T-cell (primary cell): ENCODE measurements at regions of chr5 and their contacts with region 1.

Region 1: GRCh38 chr5:110031402-110032140 is 341.8 kb downstream of the MAN2A1 start:
- DNase-seq: peak in 29 of 35 experiments; percentile 5 to 50 (median 16)
- ATAC-seq: peak in 3 of 4 experiments; percentile 53 to 64 (median 55)
- H3K4me3 ChIP-seq: no peak overlapping the region
- H3K4me3 Mint-ChIP-seq: no peak overlapping the region
- H3K27ac ChIP-seq: no peak overlapping the region
- H3K27ac Mint-ChIP-seq: peak overlapping the region in 1 of 2 donors; percentile 37
- H3K4me1 ChIP-seq: peaks cover 2 to 5% of the 10 kb centered on the region in 2 experiments
- H3K4me1 Mint-ChIP-seq: peaks cover 22 to 49% (median 32%) of the 10 kb centered on the region in 3 donors
- H3K27me3 ChIP-seq: no peaks in the 10 kb centered on the region
- H3K27me3 Mint-ChIP-seq: no peaks in the 10 kb centered on the region

Region 2: DNA sequence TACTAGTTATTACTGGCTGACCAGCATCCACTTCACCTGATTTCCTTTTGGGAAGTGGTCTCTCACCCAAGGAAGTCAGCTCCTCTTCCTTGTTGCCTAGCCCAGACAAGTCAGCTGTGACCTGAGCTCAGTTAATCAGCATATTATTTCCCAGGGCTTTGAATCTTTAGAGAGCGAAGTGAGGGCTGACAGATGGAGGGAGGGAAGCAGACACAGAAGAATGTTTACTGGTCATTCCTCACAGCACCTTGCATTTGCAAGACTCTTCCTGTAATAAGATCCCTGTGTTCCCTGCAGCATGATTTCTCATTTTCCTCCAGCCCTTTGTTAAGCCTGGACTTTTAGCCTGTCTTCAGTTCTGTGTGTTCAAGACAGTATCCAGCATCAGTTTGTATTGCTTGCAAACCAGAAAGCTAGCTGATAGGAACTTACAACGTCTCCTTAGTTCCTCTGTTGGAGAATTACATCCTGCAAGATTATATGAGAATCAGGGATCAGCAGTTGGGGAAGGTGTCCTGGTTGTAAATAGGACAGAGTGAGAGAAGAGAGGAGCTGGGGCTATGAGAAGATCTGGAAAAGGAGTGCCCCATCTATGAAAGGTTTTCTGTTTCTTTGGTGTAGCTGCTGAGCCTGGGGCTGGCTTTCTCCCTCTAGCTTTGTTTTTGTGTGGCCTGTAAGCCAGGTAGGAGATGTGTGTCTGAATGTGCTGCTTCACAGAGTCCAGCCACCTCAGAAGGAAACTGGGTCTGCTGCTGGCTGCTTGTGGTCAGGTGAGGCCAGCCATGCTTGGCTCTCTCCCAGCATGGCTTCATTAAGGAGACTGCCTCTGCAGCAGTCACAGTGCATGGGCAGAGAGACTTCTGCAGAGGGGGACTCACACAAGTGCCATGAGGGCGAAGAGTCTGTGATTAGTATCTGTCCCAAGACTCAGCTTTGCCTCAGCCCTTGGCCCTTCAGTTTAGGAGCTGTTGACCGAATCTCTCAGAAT is 291.5 kb before region 1 on chr5:
- CTCF ChIA-PET with region 1: no interaction called
- POLR2A ChIA-PET with region 1: no interaction called
- DNase-seq: no peak
- ATAC-seq: peak in 2 of 4 experiments; percentile 15 to 45
- H3K4me3 ChIP-seq: no peak overlapping the region
- H3K4me3 Mint-ChIP-seq: peak overlapping the region in 1 of 3 donors; percentile 4
- H3K27ac ChIP-seq: no peak overlapping the region
- H3K27ac Mint-ChIP-seq: peak overlapping the region in 1 of 2 donors; percentile 56
- H3K4me1 ChIP-seq: peaks cover 0 to 8% of the 10 kb centered on the region in 2 experiments
- H3K4me1 Mint-ChIP-seq: peaks cover 66 to 75% (median 66%) of the 10 kb centered on the region in 3 donors
- H3K27me3 ChIP-seq: no peaks in the 10 kb centered on the region
- H3K27me3 Mint-ChIP-seq: no peaks in the 10 kb centered on the region

Region 3: DNA sequence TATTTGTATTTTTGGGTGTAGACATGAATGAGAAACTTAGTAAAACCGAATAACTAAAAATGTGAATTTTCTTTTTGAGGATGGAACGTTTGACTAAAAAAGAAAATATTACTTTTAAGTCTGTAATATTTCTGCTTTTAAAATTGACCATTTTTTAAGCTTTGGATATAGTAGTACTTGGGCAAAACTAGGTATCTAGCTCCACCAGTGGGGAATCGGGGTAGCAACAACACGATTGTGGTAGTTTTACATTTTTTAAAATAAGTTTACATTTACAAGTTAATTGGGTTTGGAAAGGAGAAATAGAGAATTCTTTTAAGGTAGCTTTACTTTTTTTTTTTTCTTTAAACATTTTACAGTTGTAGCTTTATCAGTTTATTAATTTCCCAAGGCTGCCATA is 187.4 kb before region 1 on chr5:
- CTCF ChIA-PET with region 1: no interaction called
- POLR2A ChIA-PET with region 1: interaction called in 1 of 2 experiments, 12 read pairs
- DNase-seq: no peak
- ATAC-seq: no peak
- H3K4me3 ChIP-seq: no peak overlapping the region
- H3K4me3 Mint-ChIP-seq: no peak overlapping the region
- H3K27ac ChIP-seq: no peak overlapping the region
- H3K27ac Mint-ChIP-seq: no peak overlapping the region
- H3K4me1 ChIP-seq: peaks cover 16 to 19% of the 10 kb centered on the region in 2 experiments
- H3K4me1 Mint-ChIP-seq: peaks cover 31 to 47% (median 40%) of the 10 kb centered on the region in 3 donors
- H3K27me3 ChIP-seq: no peaks in the 10 kb centered on the region
- H3K27me3 Mint-ChIP-seq: no peaks in the 10 kb centered on the region

Region 4: GRCh38 chr5:109996246-109996645 is 35.3 kb before region 1 on chr5:
- CTCF ChIA-PET with region 1: no interaction called
- POLR2A ChIA-PET with region 1: no interaction called
- DNase-seq: no peak
- ATAC-seq: no peak
- H3K4me3 ChIP-seq: no peak overlapping the region
- H3K4me3 Mint-ChIP-seq: no peak overlapping the region
- H3K27ac ChIP-seq: no peak overlapping the region
- H3K27ac Mint-ChIP-seq: no peak overlapping the region
- H3K4me1 ChIP-seq: no peaks in the 10 kb centered on the region
- H3K4me1 Mint-ChIP-seq: peaks cover 3 to 21% (median 3%) of the 10 kb centered on the region in 3 donors
- H3K27me3 ChIP-seq: no peaks in the 10 kb centered on the region
- H3K27me3 Mint-ChIP-seq: no peaks in the 10 kb centered on the region

Region 5: DNA sequence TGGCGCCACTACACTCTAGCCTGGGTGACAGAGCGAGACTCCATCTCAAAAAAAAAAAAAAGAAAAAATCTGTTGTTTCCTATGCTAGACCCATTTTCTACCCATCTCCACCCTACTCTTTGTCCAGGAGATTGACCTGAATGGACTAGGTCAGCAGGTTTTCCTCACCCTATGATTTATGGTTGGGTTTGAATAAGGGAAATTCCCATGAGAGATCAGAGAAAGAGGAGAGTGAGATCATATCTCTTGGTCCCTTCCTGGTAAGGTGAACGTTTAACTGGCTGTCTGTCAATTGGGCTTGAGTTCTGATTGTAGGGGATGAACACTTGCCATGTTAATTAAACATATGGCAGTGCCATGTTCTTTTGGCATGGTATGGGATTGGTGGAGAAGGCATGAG is 45.6 kb after region 1 on chr5:
- CTCF ChIA-PET with region 1: no interaction called
- POLR2A ChIA-PET with region 1: no interaction called
- DNase-seq: no peak
- ATAC-seq: no peak
- H3K4me3 ChIP-seq: no peak overlapping the region
- H3K4me3 Mint-ChIP-seq: no peak overlapping the region
- H3K27ac ChIP-seq: no peak overlapping the region
- H3K27ac Mint-ChIP-seq: no peak overlapping the region
- H3K4me1 ChIP-seq: no peaks in the 10 kb centered on the region
- H3K4me1 Mint-ChIP-seq: no peaks in the 10 kb centered on the region
- H3K27me3 ChIP-seq: peaks cover 0 to 8% of the 10 kb centered on the region in 2 experiments
- H3K27me3 Mint-ChIP-seq: peaks cover 0 to 3% of the 10 kb centered on the region in 2 donors

Region 6: DNA sequence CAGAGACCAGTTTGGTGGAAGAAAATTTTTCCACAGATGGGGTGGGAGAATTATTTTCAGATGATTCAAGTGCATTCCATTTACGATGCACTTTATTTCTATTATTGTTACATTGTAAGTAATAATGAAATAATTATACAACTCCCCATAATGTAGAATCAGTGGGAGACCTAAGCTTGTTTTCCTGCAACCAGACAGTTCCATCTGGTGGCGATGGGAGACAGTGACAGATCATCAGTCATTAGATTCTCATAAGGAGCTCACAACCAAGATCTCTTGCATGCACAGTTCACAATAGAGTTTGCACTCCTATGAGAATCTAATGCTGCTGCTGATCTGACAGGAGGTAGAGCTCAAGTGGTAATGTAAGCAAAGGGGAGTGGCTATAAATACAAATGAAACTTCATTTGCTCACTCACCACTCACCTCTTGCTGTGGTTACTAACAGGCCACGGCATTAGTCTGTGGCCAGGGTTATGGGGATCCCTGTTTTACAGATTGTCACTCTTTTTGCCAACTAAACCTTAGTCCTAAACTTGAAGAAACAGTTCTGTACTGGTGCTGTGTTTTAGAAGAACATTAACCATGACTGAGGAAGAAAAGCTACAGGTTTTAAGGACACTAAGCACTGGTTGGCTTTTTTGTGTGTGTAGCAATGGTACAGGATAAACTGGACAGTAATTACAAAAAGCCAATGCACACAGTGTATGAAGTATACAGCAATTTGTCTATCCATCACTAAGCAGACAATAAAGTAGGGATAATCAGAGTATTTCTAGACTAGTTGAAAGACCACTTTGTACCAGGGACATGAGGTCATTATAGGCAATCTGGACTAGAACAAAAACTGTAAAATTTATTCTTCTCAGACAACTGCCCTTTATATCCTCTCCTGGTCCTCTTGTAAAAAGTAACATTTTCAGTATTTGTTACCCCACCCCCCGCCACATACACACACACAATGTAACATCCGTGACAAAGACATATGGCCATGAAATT is 685.0 kb after region 1 on chr5:
- CTCF ChIA-PET with region 1: no interaction called
- POLR2A ChIA-PET with region 1: no interaction called
- DNase-seq: no peak
- ATAC-seq: no peak
- H3K4me3 ChIP-seq: no peak overlapping the region
- H3K4me3 Mint-ChIP-seq: no peak overlapping the region
- H3K27ac ChIP-seq: no peak overlapping the region
- H3K27ac Mint-ChIP-seq: no peak overlapping the region
- H3K4me1 ChIP-seq: no peaks in the 10 kb centered on the region
- H3K4me1 Mint-ChIP-seq: no peaks in the 10 kb centered on the region
- H3K27me3 ChIP-seq: no peaks in the 10 kb centered on the region
- H3K27me3 Mint-ChIP-seq: peaks cover 14 to 18% of the 10 kb centered on the region in 2 donors